ENCODE measurements at regions of chr19 and their contacts with region 1.

Region 1: DNA sequence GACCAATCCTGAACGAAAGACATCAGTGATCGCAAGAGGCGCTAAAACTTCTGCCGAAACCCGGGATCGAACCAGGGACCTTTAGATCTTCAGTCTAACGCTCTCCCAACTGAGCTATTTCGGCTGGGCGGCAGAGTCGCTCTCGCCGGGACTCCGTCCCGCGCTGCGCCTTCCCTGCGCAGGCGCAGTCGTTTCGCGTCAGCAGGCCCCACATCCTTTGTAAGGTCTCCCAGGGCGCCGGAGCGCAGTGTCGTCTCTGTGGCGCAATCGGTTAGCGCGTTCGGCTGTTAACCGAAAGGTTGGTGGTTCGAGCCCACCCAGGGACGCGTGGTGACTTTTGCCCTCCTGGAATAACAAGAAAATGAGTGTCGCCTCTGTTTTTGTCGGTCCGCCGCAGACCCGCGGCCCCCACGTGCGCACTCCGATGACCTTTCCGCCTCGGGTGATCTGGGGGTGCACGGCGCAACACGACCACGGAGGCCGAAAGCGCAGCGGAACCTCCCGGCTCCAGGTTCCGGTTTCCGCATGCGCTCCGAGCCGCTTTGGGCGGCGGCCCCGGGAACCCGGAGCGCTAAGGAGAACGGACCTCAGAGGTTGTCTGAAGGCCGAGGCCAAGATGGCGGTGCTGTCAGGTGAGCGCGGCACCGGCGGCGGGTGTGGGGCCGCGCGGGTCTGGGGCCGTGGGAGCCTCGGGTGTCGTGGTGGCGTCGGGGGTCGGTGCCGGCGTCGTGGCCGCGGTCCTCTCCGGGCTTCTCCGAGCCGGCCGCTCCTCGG is at the start of gene NDUFS7:
- DNase-seq: peak; percentile 89 to 98 (median 94)
- H3K4me3 ChIP-seq: peak within 1 kb of the TSS; percentile 81 to 89
- H3K4me3 Mint-ChIP-seq: peak within 1 kb of the TSS; percentile 89 to 98 (median 94)
- H3K27ac ChIP-seq: peak within 1 kb of the TSS; percentile 69
- H3K27ac Mint-ChIP-seq: peak within 1 kb of the TSS; percentile 96 to 100 (median 99)
- H3K4me1 ChIP-seq: peaks cover 16% of the 10 kb centered on the region
- H3K4me1 Mint-ChIP-seq: peaks cover 9 to 29% (median 16%) of the 10 kb centered on the region in 4 donors
- H3K27me3 ChIP-seq: no peaks in the 10 kb centered on the region
- H3K27me3 Mint-ChIP-seq: peaks cover 3 to 5% of the 10 kb centered on the region in 2 donors
- total RNA-seq, gene NDUFS7: 68.6 to 73.5 TPM

Region 2: DNA sequence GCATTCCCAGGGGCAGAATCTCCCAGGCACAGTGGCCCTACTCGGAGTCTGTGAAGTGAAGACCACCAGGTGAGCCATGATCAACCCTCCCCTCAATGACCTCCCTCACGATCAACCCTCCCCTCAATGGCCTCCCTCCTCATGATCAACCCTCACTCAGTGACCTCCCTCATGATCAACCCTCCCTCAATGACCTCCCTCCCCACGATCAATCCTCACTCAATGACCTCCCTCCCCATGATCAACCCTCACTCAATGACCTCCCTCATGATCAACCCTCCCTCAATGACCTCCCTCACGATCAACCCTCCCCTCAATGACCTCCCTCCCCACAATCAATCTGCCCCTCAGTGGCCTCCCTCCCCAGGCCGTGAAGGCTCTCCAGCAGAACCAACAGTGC is 241.6 kb before region 1 on chr19:
- CTCF ChIA-PET with region 1: no interaction called
- POLR2A ChIA-PET with region 1: no interaction called
- intact Hi-C with region 1: no loop called
- DNase-seq: no peak
- H3K4me3 ChIP-seq: no peak overlapping the region
- H3K4me3 Mint-ChIP-seq: no peak overlapping the region
- H3K27ac ChIP-seq: no peak overlapping the region
- H3K27ac Mint-ChIP-seq: peak overlapping the region in 5 of 7 donors; percentile 0 to 25 (median 9)
- H3K4me1 ChIP-seq: no peaks in the 10 kb centered on the region
- H3K4me1 Mint-ChIP-seq: peaks cover 3 to 10% (median 6%) of the 10 kb centered on the region in 4 donors
- H3K27me3 ChIP-seq: no peaks in the 10 kb centered on the region
- H3K27me3 Mint-ChIP-seq: no peaks in the 10 kb centered on the region

Region 3: GRCh38 chr19:1355568-1356507 is 27.7 kb before region 1 on chr19:
- CTCF ChIA-PET with region 1: interaction called, 3 read pairs
- POLR2A ChIA-PET with region 1: interaction called, 9 read pairs
- intact Hi-C with region 1: loop called (anchors 1 kb)
- DNase-seq: no peak
- H3K4me3 ChIP-seq: peak overlapping the region; percentile 28 to 50
- H3K4me3 Mint-ChIP-seq: peak overlapping the region; percentile 68 to 93 (median 89)
- H3K27ac ChIP-seq: peak overlapping the region; percentile 36
- H3K27ac Mint-ChIP-seq: peak overlapping the region; percentile 47 to 85 (median 78)
- H3K4me1 ChIP-seq: peaks cover 16% of the 10 kb centered on the region
- H3K4me1 Mint-ChIP-seq: peaks cover 8 to 32% (median 14%) of the 10 kb centered on the region in 4 donors
- H3K27me3 ChIP-seq: no peaks in the 10 kb centered on the region
- H3K27me3 Mint-ChIP-seq: no peaks in the 10 kb centered on the region

Region 4: DNA sequence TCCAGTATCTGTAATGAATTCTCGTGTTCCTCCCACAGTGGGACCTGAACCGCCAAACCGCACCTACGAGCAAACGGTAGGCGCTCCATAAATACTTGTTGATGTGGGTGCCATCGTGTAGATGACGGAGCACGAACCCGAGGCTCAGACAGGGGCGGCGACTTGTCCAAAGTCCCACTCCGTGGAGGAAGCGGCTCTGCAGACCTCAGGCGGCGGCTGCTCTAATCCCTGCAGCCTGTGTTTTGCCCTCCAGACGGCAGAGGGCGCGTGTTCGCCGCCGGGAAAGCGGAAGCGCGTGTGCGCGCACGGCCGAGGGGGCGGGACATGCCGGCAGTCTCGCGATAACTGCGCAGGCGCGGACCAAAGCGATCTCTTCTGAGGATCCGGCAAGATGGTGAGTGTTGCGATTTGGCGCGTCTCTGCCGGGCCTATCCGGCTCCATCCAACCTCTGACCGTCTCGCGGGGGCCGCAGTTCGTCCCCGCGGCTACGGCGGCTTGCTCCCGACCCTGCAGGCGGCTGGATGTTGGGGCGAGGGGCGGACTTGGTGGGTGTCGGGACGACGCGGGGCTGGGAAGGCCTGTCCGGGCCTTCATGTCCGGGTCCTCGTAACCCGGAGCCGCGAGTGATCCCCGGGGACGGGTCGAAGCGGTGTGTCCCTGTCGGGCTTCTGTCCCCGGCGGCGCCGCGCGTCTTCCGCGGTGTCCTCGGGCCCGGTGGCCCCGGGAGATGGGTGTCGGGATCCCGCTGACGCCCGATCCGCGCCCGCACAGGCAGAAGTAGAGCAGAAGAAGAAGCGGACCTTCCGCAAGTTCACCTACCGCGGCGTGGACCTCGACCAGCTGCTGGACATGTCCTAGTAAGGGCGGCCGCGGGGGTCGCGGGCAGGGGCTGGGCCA is 54.8 kb after region 1 on chr19 and contains the start of gene RPS15:
- CTCF ChIA-PET with region 1: no interaction called
- POLR2A ChIA-PET with region 1: no interaction called
- intact Hi-C with region 1: loop called (anchors 1 kb)
- DNase-seq: peak; percentile 93 to 97 (median 96)
- H3K4me3 ChIP-seq: peak within 1 kb of the TSS; percentile 47 to 79
- H3K4me3 Mint-ChIP-seq: peak within 1 kb of the TSS; percentile 97 to 99 (median 98)
- H3K27ac ChIP-seq: peak within 1 kb of the TSS; percentile 93
- H3K27ac Mint-ChIP-seq: peak within 1 kb of the TSS; percentile 98 to 99 (median 99)
- H3K4me1 ChIP-seq: peaks cover 29% of the 10 kb centered on the region
- H3K4me1 Mint-ChIP-seq: peaks cover 1 to 38% (median 19%) of the 10 kb centered on the region in 4 donors
- H3K27me3 ChIP-seq: no peaks in the 10 kb centered on the region
- H3K27me3 Mint-ChIP-seq: no peaks in the 10 kb centered on the region
- total RNA-seq, gene RPS15: 1,715 to 1,828 TPM